WTC11 (cell line): ENCODE measurements at regions of chr16 and their contacts with region 1.

Region 1: GRCh38 chr16:62256406-62256805 is 220.2 kb upstream of the CDH8 start:
- DNase-seq: no peak
- ATAC-seq: peak; percentile 89
- H3K4me3 Mint-ChIP-seq: no peak overlapping the region
- H3K27ac Mint-ChIP-seq: no peak overlapping the region
- H3K4me1 Mint-ChIP-seq: peaks cover 37% of the 10 kb centered on the region
- H3K27me3 Mint-ChIP-seq: peaks cover 7% of the 10 kb centered on the region
- CTCF ChIP-seq: peak; percentile 51; the same call in 1 of the 2 replicates

Region 2: DNA sequence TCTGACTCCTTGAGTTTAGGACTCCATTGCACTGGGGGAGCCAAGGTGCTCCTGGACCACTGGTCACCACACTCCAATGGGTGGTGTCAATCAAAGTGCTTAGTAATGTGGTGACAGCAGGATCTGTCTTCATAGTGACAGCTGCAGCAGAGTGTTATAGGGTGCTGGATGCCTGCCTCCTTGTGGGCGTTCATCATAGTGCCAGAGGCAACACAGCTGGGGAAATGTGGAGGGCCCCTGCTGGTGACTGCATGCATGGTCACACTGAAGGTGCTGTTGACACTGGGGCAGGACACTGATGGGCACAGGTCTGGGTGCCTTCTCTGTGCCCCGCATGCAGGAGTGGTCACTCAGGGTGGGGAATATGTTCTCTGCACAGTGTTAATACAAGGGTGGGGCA is 42.6 kb before region 1 on chr16:
- CTCF ChIA-PET with region 1: interaction called, 13 read pairs
- POLR2A ChIA-PET with region 1: no interaction called
- DNase-seq: peak; percentile 76
- ATAC-seq: peak; percentile 100
- H3K4me3 Mint-ChIP-seq: no peak overlapping the region
- H3K27ac Mint-ChIP-seq: no peak overlapping the region
- H3K4me1 Mint-ChIP-seq: peaks cover 9% of the 10 kb centered on the region
- H3K27me3 Mint-ChIP-seq: no peaks in the 10 kb centered on the region
- CTCF ChIP-seq: peak; percentile 71

Region 3: GRCh38 chr16:62272035-62272434 is 15.6 kb after region 1 on chr16:
- CTCF ChIA-PET with region 1: no interaction called
- POLR2A ChIA-PET with region 1: no interaction called
- DNase-seq: no peak
- ATAC-seq: no peak
- H3K4me3 Mint-ChIP-seq: no peak overlapping the region
- H3K27ac Mint-ChIP-seq: no peak overlapping the region
- H3K4me1 Mint-ChIP-seq: peaks cover 19% of the 10 kb centered on the region
- H3K27me3 Mint-ChIP-seq: no peaks in the 10 kb centered on the region
- CTCF ChIP-seq: no peak

Region 4: GRCh38 chr16:62404849-62405611 is 148.6 kb after region 1 on chr16:
- CTCF ChIA-PET with region 1: no interaction called
- POLR2A ChIA-PET with region 1: no interaction called
- DNase-seq: peak; percentile 16
- ATAC-seq: peak; percentile 67
- H3K4me3 Mint-ChIP-seq: no peak overlapping the region
- H3K27ac Mint-ChIP-seq: 0 out of 2 replicates have a peak overlapping the region, but pooled peaks have one; percentile 0
- H3K4me1 Mint-ChIP-seq: peaks cover 24% of the 10 kb centered on the region
- H3K27me3 Mint-ChIP-seq: peaks cover 9% of the 10 kb centered on the region; the same call in 1 of the 2 replicates
- CTCF ChIP-seq: no peak